ENCODE measurements at regions of chr6 and their contacts with region 1.

Region 1: GRCh38 chr6:130412556-130413290 is 46.9 kb downstream of the TMEM200A start:
- DNase-seq: peak; percentile 21
- ATAC-seq: 0 out of 2 replicates have a peak, but pooled peaks have one; percentile 27
- H3K4me3 ChIP-seq: no peak overlapping the region
- H3K27ac ChIP-seq: no peak overlapping the region; the same call in 1 of the 2 replicates
- H3K4me1 ChIP-seq: peaks cover 16% of the 10 kb centered on the region
- H3K27me3 ChIP-seq: no peaks in the 10 kb centered on the region
- CTCF ChIP-seq: no peak
- POLR2A ChIP-seq: no peak
- RAD21 ChIP-seq: no peak

Region 2: DNA sequence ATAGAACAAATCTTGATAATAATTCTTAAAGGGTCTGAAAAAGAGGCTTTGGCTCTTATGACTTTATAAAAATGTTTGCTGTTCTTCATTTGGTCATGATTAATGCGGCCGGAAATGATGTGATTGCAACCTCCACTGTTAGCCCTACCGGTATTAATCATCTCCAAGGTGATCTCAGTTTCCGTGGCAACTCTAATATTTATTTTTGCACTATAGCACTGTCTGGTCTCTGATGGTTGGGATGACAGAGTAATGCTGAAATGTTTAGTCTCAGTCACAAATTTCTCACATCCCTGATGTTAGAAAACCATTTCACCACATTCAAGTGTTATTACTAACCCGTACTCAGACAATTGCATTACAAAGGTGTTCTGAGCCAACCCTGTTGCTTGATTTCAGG is 40.5 kb after region 1 on chr6:
- CTCF ChIA-PET with region 1: no interaction called
- POLR2A ChIA-PET with region 1: no interaction called
- dilution Hi-C with region 1: no loop called
- in situ Hi-C with region 1: no loop called
- intact Hi-C with region 1: no loop called
- DNase-seq: peak; percentile 80
- ATAC-seq: peak; percentile 32; the same call in 1 of the 2 replicates
- H3K4me3 ChIP-seq: no peak overlapping the region
- H3K27ac ChIP-seq: no peak overlapping the region
- H3K4me1 ChIP-seq: no peaks in the 10 kb centered on the region
- H3K27me3 ChIP-seq: no peaks in the 10 kb centered on the region
- CTCF ChIP-seq: no peak
- POLR2A ChIP-seq: no peak
- RAD21 ChIP-seq: peak; percentile 17; the same call in 1 of the 2 replicates

Region 3: GRCh38 chr6:130647246-130647645 is 234.5 kb after region 1 on chr6:
- CTCF ChIA-PET with region 1: no interaction called
- POLR2A ChIA-PET with region 1: interaction called, 15 read pairs
- dilution Hi-C with region 1: no loop called
- in situ Hi-C with region 1: no loop called
- intact Hi-C with region 1: no loop called
- DNase-seq: no peak
- ATAC-seq: no peak
- H3K4me3 ChIP-seq: no peak overlapping the region
- H3K27ac ChIP-seq: no peak overlapping the region
- H3K4me1 ChIP-seq: no peaks in the 10 kb centered on the region; the same call in 1 of the 2 replicates
- H3K27me3 ChIP-seq: no peaks in the 10 kb centered on the region
- CTCF ChIP-seq: no peak
- POLR2A ChIP-seq: no peak
- RAD21 ChIP-seq: no peak

Region 4: GRCh38 chr6:130981409-130981808 is 568.7 kb after region 1 on chr6:
- CTCF ChIA-PET with region 1: no interaction called
- POLR2A ChIA-PET with region 1: no interaction called
- dilution Hi-C with region 1: no loop called
- in situ Hi-C with region 1: no loop called
- intact Hi-C with region 1: no loop called
- DNase-seq: peak; percentile 84
- ATAC-seq: peak; percentile 51
- H3K4me3 ChIP-seq: no peak overlapping the region
- H3K27ac ChIP-seq: no peak overlapping the region
- H3K4me1 ChIP-seq: peaks cover 4% of the 10 kb centered on the region
- H3K27me3 ChIP-seq: no peaks in the 10 kb centered on the region
- CTCF ChIP-seq: no peak
- POLR2A ChIP-seq: no peak
- RAD21 ChIP-seq: no peak

Region 5: DNA sequence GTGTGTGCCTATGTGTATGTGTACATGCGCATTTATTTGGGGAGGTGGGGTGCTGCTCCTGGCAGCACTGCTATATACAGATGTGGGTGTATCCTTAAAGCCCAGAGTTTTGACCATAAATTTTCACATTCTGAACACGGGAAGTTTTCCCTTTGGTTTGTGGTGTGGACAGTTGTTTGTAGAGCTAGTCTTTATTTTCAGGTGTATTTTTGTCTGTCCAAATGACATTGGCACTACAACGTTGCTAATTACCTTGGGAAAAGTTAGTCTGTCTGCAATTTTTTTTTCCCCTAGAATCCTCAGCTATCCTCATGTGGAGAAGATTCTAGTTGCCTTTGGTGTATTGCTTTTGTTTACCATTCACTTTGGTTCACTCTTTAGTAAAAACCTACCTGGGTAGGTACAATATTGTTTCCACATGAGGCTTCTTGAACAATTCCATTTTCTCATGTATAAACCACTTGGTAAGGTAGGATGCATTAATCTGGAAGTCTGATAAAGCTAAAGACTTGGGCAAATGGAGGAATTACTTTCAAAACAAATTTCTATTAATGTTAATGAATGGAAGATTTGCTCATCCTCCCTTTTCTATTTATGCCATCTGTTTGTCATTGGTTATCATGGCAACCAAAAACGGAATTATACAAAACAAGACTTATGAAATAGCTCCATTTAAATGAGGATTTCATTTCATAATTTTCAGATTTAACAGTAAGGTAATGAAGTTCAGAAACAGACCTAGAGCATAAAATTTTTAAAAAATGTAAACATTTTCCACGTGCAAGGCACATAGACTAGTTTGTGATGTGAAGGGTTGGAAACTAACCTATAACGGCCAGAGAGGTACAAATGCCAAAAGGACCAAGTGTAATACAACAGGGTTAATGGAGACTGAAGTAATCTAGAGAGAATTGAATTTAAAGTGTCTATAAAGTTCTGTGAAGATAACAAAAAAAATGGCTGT is 1534.6 kb after region 1 on chr6:
- CTCF ChIA-PET with region 1: no interaction called
- POLR2A ChIA-PET with region 1: no interaction called
- dilution Hi-C with region 1: no loop called
- in situ Hi-C with region 1: no loop called
- intact Hi-C with region 1: no loop called
- DNase-seq: peak; percentile 84
- ATAC-seq: no peak
- H3K4me3 ChIP-seq: peak overlapping the region; percentile 8; the same call in 1 of the 2 replicates
- H3K27ac ChIP-seq: peak overlapping the region; percentile 16; the same call in 1 of the 2 replicates
- H3K4me1 ChIP-seq: peaks cover 3% of the 10 kb centered on the region
- H3K27me3 ChIP-seq: no peaks in the 10 kb centered on the region
- CTCF ChIP-seq: no peak
- POLR2A ChIP-seq: peak; percentile 85
- RAD21 ChIP-seq: no peak